ENCODE measurements at regions of chr22 and their contacts with region 1.

Region 1: DNA sequence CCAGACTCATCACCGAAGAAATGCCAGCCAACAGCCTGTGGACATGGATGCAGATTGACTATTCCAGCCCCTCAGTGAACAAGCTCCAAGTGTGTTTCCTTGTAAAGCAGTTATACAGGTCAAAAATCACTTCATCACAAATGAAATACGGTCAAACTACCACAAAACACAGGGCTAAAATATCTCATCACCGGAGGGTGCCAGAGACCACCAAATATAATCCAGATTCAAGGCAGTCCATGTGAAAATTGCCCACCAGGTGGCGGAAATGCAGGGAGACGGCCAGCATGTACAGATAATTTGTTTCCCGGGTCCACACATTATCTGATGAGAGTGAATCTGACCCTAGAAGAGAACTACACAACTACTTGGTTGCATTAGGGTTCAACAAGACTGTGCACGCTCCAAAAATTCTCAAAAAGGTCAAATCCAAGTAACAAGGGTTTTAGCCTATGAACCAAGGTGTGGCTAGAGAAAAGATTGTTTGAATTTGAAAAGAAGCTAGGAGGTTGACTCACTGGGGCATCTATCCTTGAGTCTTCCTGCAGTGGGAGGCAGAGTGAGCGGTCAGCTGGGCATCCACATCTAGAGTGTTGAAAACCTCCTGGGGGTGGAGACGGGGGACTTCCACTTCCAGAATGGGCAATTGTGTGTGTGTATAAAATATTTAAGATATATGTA is 71.7 kb downstream of the IGLL5 start:
- DNase-seq: peak; percentile 59 to 76 (median 68)
- H3K4me3 ChIP-seq: no peak overlapping the region
- H3K4me3 Mint-ChIP-seq: no peak overlapping the region
- H3K27ac ChIP-seq: no peak overlapping the region
- H3K27ac Mint-ChIP-seq: peak overlapping the region in 1 of 7 donors; percentile 29
- H3K4me1 ChIP-seq: no peaks in the 10 kb centered on the region
- H3K4me1 Mint-ChIP-seq: peaks cover 0 to 4% (median 2%) of the 10 kb centered on the region in 4 donors
- H3K27me3 ChIP-seq: no peaks in the 10 kb centered on the region
- H3K27me3 Mint-ChIP-seq: peaks cover 11 to 18% of the 10 kb centered on the region in 2 donors

Region 2: GRCh38 chr22:22593964-22594656 is 365.2 kb before region 1 on chr22:
- CTCF ChIA-PET with region 1: interaction called, 34 read pairs
- POLR2A ChIA-PET with region 1: no interaction called
- intact Hi-C with region 1: loop called (anchors 1 kb)
- DNase-seq: peak; percentile 31 to 59 (median 36)
- H3K4me3 ChIP-seq: no peak overlapping the region
- H3K4me3 Mint-ChIP-seq: no peak overlapping the region
- H3K27ac ChIP-seq: no peak overlapping the region
- H3K27ac Mint-ChIP-seq: no peak overlapping the region
- H3K4me1 ChIP-seq: no peaks in the 10 kb centered on the region
- H3K4me1 Mint-ChIP-seq: peaks cover 0 to 4% (median 2%) of the 10 kb centered on the region in 4 donors
- H3K27me3 ChIP-seq: no peaks in the 10 kb centered on the region
- H3K27me3 Mint-ChIP-seq: peaks cover 3 to 6% of the 10 kb centered on the region in 2 donors

Region 3: DNA sequence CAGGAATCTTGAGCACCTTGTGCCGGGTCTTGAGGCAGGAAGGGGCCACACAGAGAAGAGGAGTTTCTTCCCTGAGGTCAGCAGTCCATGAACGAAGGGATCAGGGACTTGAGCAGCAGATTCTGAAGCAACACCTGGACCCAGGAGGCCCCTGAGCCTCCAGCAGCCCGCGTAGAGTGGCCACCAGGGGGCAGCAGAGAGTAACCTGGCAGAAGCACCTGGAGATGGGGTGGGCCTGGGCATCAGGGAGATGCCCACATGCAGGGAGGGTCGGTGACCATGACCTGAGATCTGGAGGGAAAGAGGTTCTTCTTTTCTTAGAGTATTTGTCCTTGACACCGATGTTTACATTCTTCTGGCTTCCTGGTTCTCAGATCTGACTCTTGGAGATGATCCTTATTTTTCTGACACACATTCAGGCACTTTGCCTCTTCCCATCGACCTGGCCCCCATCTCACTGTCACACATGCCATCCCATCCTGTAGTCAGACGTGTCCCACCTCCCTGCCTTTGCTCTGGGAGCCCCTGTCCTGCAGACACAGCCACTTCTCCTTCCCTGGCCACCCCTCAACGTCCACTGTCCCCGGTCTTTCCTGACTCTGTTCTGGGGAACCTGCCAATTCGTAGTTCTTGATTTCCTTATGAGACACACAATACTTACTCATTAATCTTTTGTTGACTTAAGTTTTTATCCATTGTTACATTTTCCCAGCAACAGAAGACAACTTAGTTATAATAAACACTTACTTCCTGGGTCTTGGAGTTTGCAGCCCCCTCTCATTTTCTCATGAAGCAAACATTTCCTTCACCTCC is 248.4 kb before region 1 on chr22:
- CTCF ChIA-PET with region 1: interaction called, 14 read pairs
- POLR2A ChIA-PET with region 1: no interaction called
- intact Hi-C with region 1: loop called (anchors 1 kb)
- DNase-seq: peak; percentile 54 to 69 (median 64)
- H3K4me3 ChIP-seq: no peak overlapping the region
- H3K4me3 Mint-ChIP-seq: no peak overlapping the region
- H3K27ac ChIP-seq: no peak overlapping the region
- H3K27ac Mint-ChIP-seq: peak overlapping the region in 3 of 7 donors; percentile 29 to 57 (median 36)
- H3K4me1 ChIP-seq: no peaks in the 10 kb centered on the region
- H3K4me1 Mint-ChIP-seq: peaks cover 0 to 3% (median 2%) of the 10 kb centered on the region in 4 donors
- H3K27me3 ChIP-seq: no peaks in the 10 kb centered on the region
- H3K27me3 Mint-ChIP-seq: no peaks in the 10 kb centered on the region

Region 4: DNA sequence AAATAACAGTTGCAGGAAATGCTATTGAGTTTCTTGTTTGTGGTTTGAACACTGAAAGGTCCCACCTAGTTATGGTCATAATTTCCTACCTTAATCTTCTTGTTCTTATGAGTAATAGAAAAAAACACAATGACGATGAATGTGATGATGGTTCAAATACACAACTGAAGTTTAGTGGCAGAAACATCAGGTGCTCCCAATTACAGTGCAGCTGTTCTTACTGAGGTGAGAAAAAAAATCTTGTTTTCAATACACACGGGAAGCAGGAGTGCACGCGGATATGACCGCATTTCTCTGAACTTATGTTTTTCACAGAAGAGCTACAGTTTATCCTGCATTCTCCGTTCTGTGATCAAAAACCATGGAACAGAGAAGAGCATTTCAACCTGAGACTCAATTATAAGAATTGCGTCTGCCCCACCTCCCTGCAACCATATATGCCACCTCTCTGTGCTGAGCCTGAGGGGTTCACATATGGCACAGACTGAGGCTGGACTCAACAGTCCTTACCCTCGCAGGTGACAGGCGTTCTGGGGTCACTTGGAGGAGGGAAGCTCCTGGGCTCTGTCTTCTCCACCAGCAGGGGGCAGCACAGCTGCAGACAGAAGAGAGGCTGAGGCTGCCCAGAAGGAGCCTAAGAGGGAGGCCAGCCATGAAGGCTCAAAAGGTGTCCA is 171.4 kb before region 1 on chr22:
- CTCF ChIA-PET with region 1: interaction called, 4 read pairs
- POLR2A ChIA-PET with region 1: no interaction called
- intact Hi-C with region 1: loop called (anchors 5 kb)
- DNase-seq: peak; percentile 66 to 75 (median 70)
- H3K4me3 ChIP-seq: no peak overlapping the region
- H3K4me3 Mint-ChIP-seq: peak overlapping the region in 7 of 8 donors; percentile 6 to 61 (median 53)
- H3K27ac ChIP-seq: peak overlapping the region; percentile 49
- H3K27ac Mint-ChIP-seq: peak overlapping the region; percentile 79 to 94 (median 90)
- H3K4me1 ChIP-seq: peaks cover 58% of the 10 kb centered on the region
- H3K4me1 Mint-ChIP-seq: peaks cover 34 to 75% (median 52%) of the 10 kb centered on the region in 4 donors
- H3K27me3 ChIP-seq: no peaks in the 10 kb centered on the region
- H3K27me3 Mint-ChIP-seq: no peaks in the 10 kb centered on the region

Region 5: DNA sequence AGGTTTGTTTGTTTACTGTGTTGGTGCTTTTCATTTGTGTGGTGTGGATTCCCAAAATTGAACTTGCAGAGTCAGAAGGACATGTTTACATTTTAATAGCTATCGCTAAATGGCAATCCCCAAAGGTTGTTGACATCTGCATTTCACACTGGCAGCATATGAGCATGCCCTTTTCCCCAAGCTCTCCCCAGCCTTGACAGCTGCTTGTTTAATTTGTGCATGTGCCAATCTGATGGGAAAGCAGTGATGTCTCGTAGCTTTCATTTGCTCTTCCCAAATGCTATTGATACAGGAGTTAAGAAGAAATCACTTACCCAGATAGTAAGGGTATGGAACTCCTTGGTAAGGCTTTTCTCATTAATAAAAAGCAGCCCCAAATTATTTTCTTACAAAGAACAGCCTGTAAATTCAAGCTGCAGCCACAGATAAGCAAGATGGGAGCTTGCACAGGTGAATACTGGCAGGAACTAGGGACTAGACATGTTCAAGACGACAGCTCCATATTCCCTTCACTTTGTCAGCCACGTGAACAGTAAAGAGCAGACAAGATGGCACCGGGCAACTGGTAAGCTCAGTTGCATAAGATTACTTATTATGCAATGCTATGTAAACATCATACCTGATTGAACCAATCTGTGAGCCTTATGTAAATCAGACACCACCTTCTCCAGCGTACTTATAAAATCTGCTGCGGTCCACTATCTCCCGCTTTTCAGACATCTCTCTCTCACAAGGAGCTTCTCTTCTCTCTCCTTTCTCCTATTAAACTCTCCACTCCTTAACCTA is 15.7 kb after region 1 on chr22:
- CTCF ChIA-PET with region 1: interaction called, 27 read pairs
- POLR2A ChIA-PET with region 1: no interaction called
- intact Hi-C with region 1: no loop called
- DNase-seq: no peak
- H3K4me3 ChIP-seq: no peak overlapping the region
- H3K4me3 Mint-ChIP-seq: no peak overlapping the region
- H3K27ac ChIP-seq: no peak overlapping the region
- H3K27ac Mint-ChIP-seq: no peak overlapping the region
- H3K4me1 ChIP-seq: no peaks in the 10 kb centered on the region
- H3K4me1 Mint-ChIP-seq: no peaks in the 10 kb centered on the region
- H3K27me3 ChIP-seq: no peaks in the 10 kb centered on the region
- H3K27me3 Mint-ChIP-seq: peaks cover 17 to 26% of the 10 kb centered on the region in 2 donors

Region 6: GRCh38 chr22:23063539-23064380 is 104.5 kb after region 1 on chr22:
- CTCF ChIA-PET with region 1: no interaction called
- POLR2A ChIA-PET with region 1: no interaction called
- intact Hi-C with region 1: no loop called
- DNase-seq: no peak
- H3K4me3 ChIP-seq: no peak overlapping the region
- H3K4me3 Mint-ChIP-seq: no peak overlapping the region
- H3K27ac ChIP-seq: no peak overlapping the region
- H3K27ac Mint-ChIP-seq: no peak overlapping the region
- H3K4me1 ChIP-seq: no peaks in the 10 kb centered on the region
- H3K4me1 Mint-ChIP-seq: peaks cover 0 to 7% (median 3%) of the 10 kb centered on the region in 4 donors
- H3K27me3 ChIP-seq: no peaks in the 10 kb centered on the region
- H3K27me3 Mint-ChIP-seq: no peaks in the 10 kb centered on the region

Region 7: DNA sequence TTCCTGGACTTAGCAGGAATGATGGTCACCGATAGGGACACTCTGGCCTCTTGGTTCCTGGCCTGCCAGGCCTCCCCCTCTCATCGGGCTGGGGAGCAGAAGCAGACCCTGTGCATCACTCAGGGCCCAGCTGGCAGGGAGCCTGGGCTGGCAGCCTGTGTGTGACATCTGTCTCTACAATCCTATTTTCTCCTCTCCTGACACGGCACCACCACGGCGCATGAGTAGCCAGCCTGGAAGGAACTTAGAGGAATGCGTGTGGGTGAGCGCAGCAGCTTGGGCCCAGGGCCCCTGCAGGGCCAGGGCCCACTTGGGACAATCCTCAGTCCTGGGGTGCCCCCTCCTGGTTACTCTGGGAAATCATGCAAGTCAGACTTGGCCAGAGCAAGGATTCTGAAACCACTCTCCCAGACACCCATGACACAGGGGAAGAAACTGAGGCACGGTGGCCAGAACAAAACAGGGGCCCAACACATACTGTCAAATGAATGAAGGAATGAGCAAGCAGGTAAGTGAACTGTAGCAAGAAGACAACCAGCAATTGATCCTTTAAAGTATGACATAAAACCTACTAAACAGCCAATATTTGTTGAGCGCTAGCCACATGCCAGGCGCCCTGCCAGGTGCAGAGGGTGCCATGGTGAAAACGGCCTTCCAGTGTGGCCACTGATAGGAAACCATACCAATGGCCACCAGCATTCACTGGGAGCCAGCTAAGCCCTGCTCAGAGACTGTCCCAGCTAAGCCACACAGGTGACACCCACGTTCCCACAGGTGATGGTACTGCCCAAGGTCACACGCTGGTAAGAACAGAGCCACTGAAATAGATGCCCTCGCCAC is 169.2 kb after region 1 on chr22:
- CTCF ChIA-PET with region 1: interaction called, 185 read pairs
- POLR2A ChIA-PET with region 1: no interaction called
- intact Hi-C with region 1: loop called (anchors 1 kb)
- DNase-seq: peak; percentile 64 to 70 (median 66)
- H3K4me3 ChIP-seq: no peak overlapping the region
- H3K4me3 Mint-ChIP-seq: no peak overlapping the region
- H3K27ac ChIP-seq: no peak overlapping the region
- H3K27ac Mint-ChIP-seq: peak overlapping the region in 4 of 7 donors; percentile 36 to 92 (median 84)
- H3K4me1 ChIP-seq: no peaks in the 10 kb centered on the region
- H3K4me1 Mint-ChIP-seq: peaks cover 0 to 7% (median 5%) of the 10 kb centered on the region in 4 donors
- H3K27me3 ChIP-seq: no peaks in the 10 kb centered on the region
- H3K27me3 Mint-ChIP-seq: no peaks in the 10 kb centered on the region

Region 8: GRCh38 chr22:23385291-23386244 is 426.3 kb after region 1 on chr22:
- CTCF ChIA-PET with region 1: interaction called, 19 read pairs
- POLR2A ChIA-PET with region 1: no interaction called
- intact Hi-C with region 1: no loop called
- DNase-seq: peak; percentile 66 to 76 (median 68)
- H3K4me3 ChIP-seq: no peak overlapping the region
- H3K4me3 Mint-ChIP-seq: no peak overlapping the region
- H3K27ac ChIP-seq: no peak overlapping the region
- H3K27ac Mint-ChIP-seq: no peak overlapping the region
- H3K4me1 ChIP-seq: peaks cover 4% of the 10 kb centered on the region
- H3K4me1 Mint-ChIP-seq: no peaks in the 10 kb centered on the region
- H3K27me3 ChIP-seq: no peaks in the 10 kb centered on the region
- H3K27me3 Mint-ChIP-seq: peaks cover 0 to 8% of the 10 kb centered on the region in 2 donors